GM12878 (cell line): ENCODE measurements at regions of chr6 and their contacts with region 1.

Region 1: DNA sequence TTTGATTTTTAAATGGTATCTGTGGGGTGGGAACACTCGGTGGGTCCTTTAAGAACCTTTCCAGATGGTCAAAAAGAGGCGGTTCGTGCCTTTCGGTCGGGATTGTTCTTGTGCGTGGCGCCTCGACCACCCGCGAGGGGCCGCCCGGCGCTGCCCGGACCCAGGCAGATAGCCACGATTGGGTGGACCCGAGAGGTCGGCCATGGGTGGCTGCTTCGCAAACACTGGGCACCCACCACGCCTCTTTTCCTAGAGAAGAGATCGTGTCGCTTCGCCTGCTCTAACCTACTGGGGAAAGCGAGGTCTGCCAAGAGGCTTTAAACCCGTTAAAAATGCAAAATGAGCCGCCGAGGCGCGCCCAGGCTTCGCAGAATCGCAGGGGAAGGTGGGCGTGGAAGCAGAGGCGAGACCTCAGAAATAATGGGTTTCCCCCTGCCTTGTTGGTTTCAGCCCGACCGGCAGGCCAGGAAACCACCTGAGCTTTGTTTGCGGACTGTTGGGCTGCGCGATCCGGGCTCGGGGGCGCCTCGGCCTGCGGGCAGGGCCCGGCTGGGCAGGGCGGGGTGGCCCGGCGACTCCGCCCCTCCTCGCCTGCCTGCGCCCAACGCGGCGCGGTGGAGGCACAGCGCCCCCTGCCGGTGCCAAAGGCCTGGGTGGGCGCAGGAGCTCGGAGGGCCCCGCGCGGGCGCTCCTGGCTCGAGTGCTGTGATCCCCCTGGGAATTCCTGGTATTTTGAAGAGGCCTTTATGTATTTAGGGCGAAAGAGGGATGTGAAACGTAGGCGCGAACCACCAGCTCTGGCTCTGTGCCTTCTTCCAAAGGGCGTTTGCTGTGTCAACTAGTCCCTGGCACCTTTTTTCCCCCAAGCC is 1.6 kb downstream of the MARCKS start:
- DNase-seq: peak; percentile 87
- ATAC-seq: peak; percentile 83
- H3K4me3 ChIP-seq: peak overlapping the region; percentile 90
- H3K27ac ChIP-seq: peak overlapping the region; percentile 94
- H3K4me1 ChIP-seq: peaks cover 5% of the 10 kb centered on the region
- H3K27me3 ChIP-seq: no peaks in the 10 kb centered on the region
- CTCF ChIP-seq: peak; percentile 83 to 89 (median 88)
- EP300 ChIP-seq: peak; percentile 69 to 77; a peak in 3 of 4 replicates
- POLR2A ChIP-seq: peak; percentile 95
- RAD21 ChIP-seq: peak; percentile 86

Region 2: GRCh38 chr6:113292646-113293422 is 565.9 kb before region 1 on chr6:
- CTCF ChIA-PET with region 1: no interaction called
- POLR2A ChIA-PET with region 1: interaction called, 3 read pairs
- RAD21 ChIA-PET with region 1: interaction called, 7 read pairs
- SMC1A ChIA-PET with region 1: no interaction called
- in situ Hi-C with region 1: no loop called
- intact Hi-C with region 1: loop called (anchors 5 kb)
- DNase-seq: peak; percentile 31
- ATAC-seq: peak; percentile 96
- H3K4me3 ChIP-seq: no peak overlapping the region
- H3K27ac ChIP-seq: no peak overlapping the region
- H3K4me1 ChIP-seq: no peaks in the 10 kb centered on the region; the same call in 1 of the 2 replicates
- H3K27me3 ChIP-seq: no peaks in the 10 kb centered on the region
- CTCF ChIP-seq: no peak
- EP300 ChIP-seq: peak; percentile 58 to 70; a peak in 2 of 4 replicates
- POLR2A ChIP-seq: no peak
- RAD21 ChIP-seq: no peak

Region 3: GRCh38 chr6:113626475-113626874 is 232.2 kb before region 1 on chr6:
- CTCF ChIA-PET with region 1: interaction called, 62 read pairs
- POLR2A ChIA-PET with region 1: interaction called, 50 read pairs
- RAD21 ChIA-PET with region 1: interaction called, 142 read pairs
- SMC1A ChIA-PET with region 1: interaction called, 41 read pairs
- in situ Hi-C with region 1: loop called (anchors 5 kb)
- intact Hi-C with region 1: loop called (anchors 1 kb)
- DNase-seq: no peak
- ATAC-seq: peak; percentile 42
- H3K4me3 ChIP-seq: peak overlapping the region; percentile 25; the same call in 1 of the 2 replicates
- H3K27ac ChIP-seq: peak overlapping the region; percentile 100
- H3K4me1 ChIP-seq: peaks cover 68% of the 10 kb centered on the region
- H3K27me3 ChIP-seq: no peaks in the 10 kb centered on the region
- CTCF ChIP-seq: no peak; a peak in 1 of 6 replicates
- EP300 ChIP-seq: 0 out of 4 replicates have a peak, but pooled peaks of 1 of the 2 experiments have one; percentile 11
- POLR2A ChIP-seq: no peak
- RAD21 ChIP-seq: peak; percentile 39; the same call in 1 of the 2 replicates

Region 4: DNA sequence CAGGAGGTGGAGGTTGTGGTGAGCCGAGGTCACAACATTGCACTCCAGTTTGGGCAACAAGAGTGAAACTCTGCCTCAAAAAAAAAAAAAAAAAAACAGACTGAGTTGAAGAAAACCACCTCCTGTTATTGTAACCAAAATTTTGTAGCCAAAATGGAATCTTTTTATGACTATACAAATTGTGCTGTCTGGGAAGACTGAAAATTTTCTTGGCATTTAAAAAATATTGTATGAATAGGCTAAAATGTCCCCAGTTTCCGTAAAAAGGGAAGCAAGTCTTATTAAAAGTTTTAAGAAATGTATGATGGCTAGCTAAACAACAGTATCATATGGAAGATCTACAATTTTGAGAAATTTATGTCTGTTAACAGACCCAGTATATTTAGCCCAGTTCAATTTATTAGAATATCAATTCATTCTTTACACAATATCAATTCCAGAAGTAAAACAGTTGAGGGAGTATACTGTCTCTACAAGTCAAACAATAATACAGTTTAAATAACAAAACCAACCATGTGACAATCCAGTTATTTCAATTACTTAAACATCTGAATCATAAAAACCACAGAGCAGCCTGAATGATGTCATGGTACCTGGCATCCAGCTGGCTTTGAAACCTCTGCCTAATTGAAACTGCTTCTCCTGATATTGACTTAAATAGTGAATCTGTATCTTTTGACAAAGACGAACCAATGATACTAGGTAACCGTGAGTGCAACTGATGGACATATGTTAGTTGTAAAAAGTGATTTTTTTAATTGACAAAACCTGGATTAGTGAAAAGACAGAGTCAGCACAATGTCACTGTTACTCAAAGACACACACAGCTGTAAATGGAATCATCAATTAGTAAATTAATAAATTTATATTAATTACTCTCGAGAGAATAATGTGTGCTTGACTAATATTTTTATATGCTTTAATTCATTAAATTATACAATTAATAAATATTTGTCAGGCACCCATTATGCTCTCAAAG is 168.1 kb before region 1 on chr6:
- CTCF ChIA-PET with region 1: interaction called, 5 read pairs
- POLR2A ChIA-PET with region 1: interaction called, 3 read pairs
- RAD21 ChIA-PET with region 1: interaction called, 6 read pairs
- SMC1A ChIA-PET with region 1: no interaction called
- in situ Hi-C with region 1: no loop called
- intact Hi-C with region 1: loop called (anchors 2 kb)
- DNase-seq: peak; percentile 34
- ATAC-seq: peak; percentile 89
- H3K4me3 ChIP-seq: no peak overlapping the region
- H3K27ac ChIP-seq: no peak overlapping the region
- H3K4me1 ChIP-seq: no peaks in the 10 kb centered on the region
- H3K27me3 ChIP-seq: no peaks in the 10 kb centered on the region
- CTCF ChIP-seq: no peak
- EP300 ChIP-seq: 0 out of 4 replicates have a peak, but pooled peaks of 1 of the 2 experiments have one; percentile 30
- POLR2A ChIP-seq: no peak
- RAD21 ChIP-seq: no peak

Region 5: DNA sequence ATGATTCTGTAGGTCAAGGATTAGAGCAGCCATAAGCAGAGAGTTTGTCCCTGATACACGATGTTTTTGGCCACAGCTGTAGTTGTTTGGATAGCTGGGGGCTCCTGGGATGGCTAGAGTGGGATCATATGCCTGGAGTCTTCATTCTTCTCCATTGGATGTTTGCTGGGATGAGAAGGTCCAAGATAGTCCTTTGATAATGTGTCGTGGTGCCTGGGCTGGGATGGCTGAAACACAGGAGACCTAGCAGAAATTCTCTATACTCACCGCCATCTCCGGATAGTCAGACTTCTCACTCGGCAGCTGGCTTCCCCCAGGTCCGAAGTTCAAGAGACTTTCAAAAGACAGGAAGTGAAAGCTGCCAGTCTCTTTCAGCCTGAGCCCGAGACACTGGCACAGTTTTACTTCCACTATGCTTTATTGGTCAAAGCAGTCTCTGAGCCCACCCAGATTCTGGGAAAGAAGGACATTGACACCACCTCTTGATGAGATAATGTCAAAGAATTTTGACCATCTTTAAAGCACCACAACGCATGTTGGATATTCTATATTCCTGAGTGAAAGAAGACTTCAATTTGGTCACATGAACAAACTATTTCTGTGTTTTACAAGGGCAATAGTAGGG is 14.4 kb after region 1 on chr6:
- CTCF ChIA-PET with region 1: interaction called, 15 read pairs
- POLR2A ChIA-PET with region 1: interaction called, 8 read pairs
- RAD21 ChIA-PET with region 1: interaction called, 21 read pairs
- SMC1A ChIA-PET with region 1: interaction called, 8 read pairs
- in situ Hi-C with region 1: no loop called
- intact Hi-C with region 1: no loop called
- DNase-seq: no peak
- ATAC-seq: peak; percentile 89
- H3K4me3 ChIP-seq: peak overlapping the region; percentile 65
- H3K27ac ChIP-seq: no peak overlapping the region; the same call in 1 of the 2 replicates
- H3K4me1 ChIP-seq: peaks cover 7% of the 10 kb centered on the region
- H3K27me3 ChIP-seq: no peaks in the 10 kb centered on the region
- CTCF ChIP-seq: peak in 1 of 3 experiments; percentile 17; a peak in 2 of 6 replicates
- EP300 ChIP-seq: peak; percentile 48 to 67; a peak in 2 of 4 replicates
- POLR2A ChIP-seq: no peak
- RAD21 ChIP-seq: 0 out of 2 replicates have a peak, but pooled peaks have one; percentile 21